Right ventricle myocardium inferior (tissue), 1 donor: ENCODE measurements at regions of chr4 and their contacts with region 1.

Region 1: GRCh38 chr4:149549911-149550310 is 265.7 kb downstream of the IQCM start:
- DNase-seq: no peak
- ATAC-seq: no peak

Region 2: GRCh38 chr4:149370785-149371420 is 179.0 kb before region 1 on chr4:
- intact Hi-C with region 1: loop called (anchors 5 kb)
- DNase-seq: no peak
- ATAC-seq: peak; percentile 63

Region 3: GRCh38 chr4:149897783-149898182 is 347.9 kb after region 1 on chr4:
- intact Hi-C with region 1: loop called (anchors 10 kb)
- DNase-seq: no peak
- ATAC-seq: no peak

Region 4: GRCh38 chr4:150010525-150011126 is 460.7 kb after region 1 on chr4:
- intact Hi-C with region 1: no loop called
- DNase-seq: no peak
- ATAC-seq: peak; percentile 77